ENCODE measurements at regions of chr3 and their contacts with region 1.

Region 1: DNA sequence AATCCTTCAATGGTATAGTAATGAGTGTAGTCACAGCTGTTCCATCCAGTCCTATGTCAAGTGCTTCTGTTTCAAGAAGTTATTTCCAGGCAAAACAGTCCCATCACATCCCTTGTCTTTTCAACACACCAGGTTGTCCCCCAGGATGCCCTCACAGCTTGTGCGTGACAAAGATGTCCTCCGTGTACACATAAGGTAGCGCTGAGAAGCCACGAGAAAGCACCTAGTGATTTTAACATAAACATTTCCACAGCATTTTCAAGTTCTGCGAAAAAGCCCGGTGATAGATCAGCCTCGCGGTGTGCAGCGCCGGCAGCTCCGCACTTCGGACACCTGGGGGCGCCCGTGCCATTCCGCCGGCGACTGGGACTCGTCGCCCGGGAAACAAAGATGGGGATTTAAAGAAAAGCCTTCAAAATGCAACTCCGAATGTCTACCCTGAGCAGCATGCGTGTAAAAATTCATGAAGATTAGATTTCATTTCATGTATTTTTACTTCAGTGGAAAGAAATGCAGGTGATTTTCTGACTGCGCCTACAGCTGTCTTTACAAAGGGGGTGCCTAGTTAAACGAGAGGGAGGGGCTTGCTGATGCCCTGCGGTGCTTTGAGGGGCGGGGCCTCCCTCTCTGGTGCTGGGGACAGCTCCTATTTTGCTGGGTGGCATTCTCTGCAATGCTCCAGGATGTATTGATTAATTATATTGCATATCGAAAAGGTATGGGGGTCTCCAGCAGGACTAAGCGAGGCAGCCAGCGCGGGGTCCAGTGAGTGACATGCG is 49.9 kb downstream of the KY start:
- DNase-seq: peak; percentile 49
- H3K4me3 ChIP-seq: no peak overlapping the region
- H3K27ac ChIP-seq: no peak overlapping the region
- H3K4me1 ChIP-seq: peaks cover 7% of the 10 kb centered on the region
- H3K27me3 ChIP-seq: no peaks in the 10 kb centered on the region
- CTCF ChIP-seq: peak; percentile 98

Region 2: DNA sequence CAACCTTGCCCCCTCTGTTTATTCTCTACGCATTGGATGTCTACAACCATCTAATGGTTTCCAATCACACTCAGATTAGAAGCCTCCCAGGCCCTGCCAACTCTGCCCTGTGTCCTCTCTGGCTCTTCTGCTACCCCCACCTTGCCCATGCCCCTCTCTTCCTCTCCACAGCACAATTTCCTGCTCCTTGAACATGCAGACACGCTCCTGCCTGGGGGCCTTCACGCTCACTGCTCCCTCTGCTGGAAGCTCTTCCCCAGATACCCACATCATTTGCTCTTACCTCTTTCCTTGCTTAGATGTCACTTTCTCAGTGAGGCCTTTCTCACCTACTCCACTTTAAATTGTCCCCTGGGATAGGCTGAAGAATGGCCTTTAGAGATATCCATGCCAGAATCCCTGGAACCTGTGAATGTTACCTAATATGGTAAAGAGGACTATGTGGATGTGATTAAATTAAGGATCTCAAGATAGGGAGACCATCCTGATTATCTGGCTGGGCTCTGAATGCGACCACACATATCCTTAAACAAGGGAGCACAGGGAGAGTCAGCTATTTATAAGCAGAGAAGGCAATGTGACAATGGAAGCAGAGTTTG is 40.1 kb after region 1 on chr3:
- intact Hi-C with region 1: no loop called
- DNase-seq: no peak
- H3K4me3 ChIP-seq: no peak overlapping the region
- H3K27ac ChIP-seq: peak overlapping the region; percentile 44
- H3K4me1 ChIP-seq: peaks cover 51% of the 10 kb centered on the region
- H3K27me3 ChIP-seq: no peaks in the 10 kb centered on the region
- CTCF ChIP-seq: peak; percentile 51

Region 3: GRCh38 chr3:135895106-135895733 is 1294.3 kb after region 1 on chr3:
- intact Hi-C with region 1: loop called (anchors 10 kb)
- DNase-seq: peak; percentile 57
- H3K4me3 ChIP-seq: no peak overlapping the region
- H3K27ac ChIP-seq: no peak overlapping the region
- H3K4me1 ChIP-seq: no peaks in the 10 kb centered on the region
- H3K27me3 ChIP-seq: no peaks in the 10 kb centered on the region
- CTCF ChIP-seq: peak; percentile 82

Measured in left ventricle myocardium inferior (tissue), 1 donor.